ENCODE measurements at regions of chr19 and their contacts with region 1.

Region 1: GRCh38 chr19:35693830-35694599 is 10.3 kb upstream of the ZBTB32 start:
- DNase-seq: peak; percentile 81 to 88
- ATAC-seq: peak; percentile 97 to 100 (median 98)
- H3K4me3 ChIP-seq: no peak overlapping the region
- H3K27ac ChIP-seq: peak overlapping the region in 1 of 10 donors; percentile 41
- H3K4me1 ChIP-seq: peaks cover 0 to 4% (median 0%) of the 10 kb centered on the region in 9 donors
- H3K27me3 ChIP-seq: peaks cover 0 to 6% (median 0%) of the 10 kb centered on the region in 7 donors
- CTCF ChIP-seq: peak; percentile 93 to 99 (median 96)

Region 2: DNA sequence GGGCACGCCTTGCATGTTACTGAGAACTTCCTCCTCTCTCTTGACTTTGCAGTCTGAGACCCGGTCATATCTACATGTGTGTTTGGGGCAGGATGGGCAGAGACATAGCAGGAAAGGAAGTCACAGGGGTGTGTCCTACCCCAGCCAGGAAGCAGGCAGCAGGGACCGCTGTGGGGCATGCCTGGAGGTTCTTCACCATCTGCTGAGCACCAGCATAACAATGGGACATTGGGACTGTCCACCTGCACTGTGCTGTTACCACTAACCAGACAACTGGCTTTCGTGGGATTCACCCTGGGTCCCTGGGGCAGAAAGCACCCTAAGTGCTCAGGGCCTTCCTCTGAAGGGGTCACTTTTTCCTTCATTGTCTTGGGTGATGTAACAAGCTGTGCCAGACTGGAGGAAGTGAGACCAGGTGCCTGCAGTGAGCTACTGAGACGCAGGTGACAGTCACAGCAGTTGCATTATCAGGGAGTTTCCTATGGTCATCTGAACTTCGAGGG is 84.1 kb before region 1 on chr19:
- intact Hi-C with region 1: no loop called
- DNase-seq: no peak
- ATAC-seq: no peak
- H3K4me3 ChIP-seq: no peak overlapping the region
- H3K27ac ChIP-seq: peak overlapping the region in 1 of 10 donors; percentile 51
- H3K4me1 ChIP-seq: peaks cover 4 to 24% (median 12%) of the 10 kb centered on the region in 9 donors
- H3K27me3 ChIP-seq: no peaks in the 10 kb centered on the region
- CTCF ChIP-seq: no peak

Region 3: DNA sequence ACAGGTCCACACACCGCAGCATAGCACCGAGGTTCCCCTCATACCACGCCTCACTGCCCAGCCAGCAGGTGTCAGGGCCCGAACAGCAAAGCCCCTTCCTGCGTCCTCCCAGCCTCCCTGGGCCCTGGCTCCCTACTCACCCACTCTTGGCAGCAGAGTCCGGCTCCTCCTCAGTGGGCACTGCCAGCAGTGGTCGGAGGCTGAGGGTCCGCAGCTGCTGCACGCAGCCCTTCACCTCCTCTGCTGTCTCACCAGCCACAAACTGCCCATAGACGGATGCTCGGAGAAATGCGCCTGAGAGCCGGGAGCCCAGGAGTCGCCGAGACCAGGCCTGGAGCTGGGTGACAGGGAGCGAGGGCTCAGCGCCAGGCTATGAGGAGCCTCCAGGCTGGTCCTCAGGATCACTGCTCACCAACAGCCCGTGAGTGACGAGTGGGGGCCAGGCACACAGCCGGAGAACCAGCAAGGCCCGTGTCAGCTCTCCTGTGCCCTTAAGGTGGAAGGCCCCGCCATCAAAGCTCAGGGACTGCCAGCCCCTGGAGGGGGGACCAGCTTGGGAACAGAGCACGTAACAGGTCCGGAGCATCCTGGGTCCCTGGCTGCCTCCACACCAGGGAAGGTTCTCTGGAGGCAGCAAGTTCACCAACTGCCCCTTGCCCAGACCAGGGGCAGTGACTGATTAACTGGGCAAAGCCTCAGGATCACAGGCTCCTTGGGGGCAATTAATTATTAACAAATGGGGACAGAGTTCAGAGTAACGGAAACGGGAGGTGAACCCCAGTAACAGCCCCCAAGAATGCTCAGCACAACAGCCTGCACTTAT is 118.4 kb after region 1 on chr19 and contains the start of gene PRODH2:
- intact Hi-C with region 1: loop called in 2 of 10 experiments (anchors 10 kb)
- DNase-seq: no peak
- ATAC-seq: no peak
- H3K4me3 ChIP-seq: no peak within 1 kb of the TSS
- H3K27ac ChIP-seq: no peak within 1 kb of the TSS
- H3K4me1 ChIP-seq: no peaks in the 10 kb centered on the region
- H3K27me3 ChIP-seq: peaks cover 0 to 55% (median 16%) of the 10 kb centered on the region in 7 donors
- CTCF ChIP-seq: no peak
- total RNA-seq, gene PRODH2: not detected

Region 4: DNA sequence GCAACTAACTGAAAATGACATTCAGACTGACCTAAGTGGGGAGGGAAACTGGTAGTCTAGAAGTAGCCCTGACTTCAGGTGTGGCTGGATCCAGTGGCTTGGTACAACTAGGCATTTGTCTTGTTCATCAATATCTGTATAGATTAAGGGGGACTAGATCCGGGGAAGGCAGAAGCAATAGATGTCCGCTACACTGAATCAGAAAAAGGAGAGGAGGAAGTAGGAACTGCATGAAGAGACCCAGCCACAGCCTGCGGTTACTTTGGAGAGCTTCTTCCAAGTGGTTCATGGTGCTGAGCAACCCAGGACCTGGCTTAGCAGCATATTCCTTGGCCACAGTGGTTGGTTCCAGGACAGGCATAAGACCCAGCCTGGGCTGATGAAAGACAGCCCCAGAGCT is 128.6 kb after region 1 on chr19:
- intact Hi-C with region 1: loop called in 4 of 10 experiments (anchors 5 to 10 kb)
- DNase-seq: no peak
- ATAC-seq: no peak
- H3K4me3 ChIP-seq: no peak overlapping the region
- H3K27ac ChIP-seq: no peak overlapping the region
- H3K4me1 ChIP-seq: no peaks in the 10 kb centered on the region
- H3K27me3 ChIP-seq: peaks cover 0 to 58% (median 33%) of the 10 kb centered on the region in 7 donors
- CTCF ChIP-seq: no peak